Caco-2 (cell line): ENCODE measurements at regions of chr13 and their contacts with region 1.

Region 1: DNA sequence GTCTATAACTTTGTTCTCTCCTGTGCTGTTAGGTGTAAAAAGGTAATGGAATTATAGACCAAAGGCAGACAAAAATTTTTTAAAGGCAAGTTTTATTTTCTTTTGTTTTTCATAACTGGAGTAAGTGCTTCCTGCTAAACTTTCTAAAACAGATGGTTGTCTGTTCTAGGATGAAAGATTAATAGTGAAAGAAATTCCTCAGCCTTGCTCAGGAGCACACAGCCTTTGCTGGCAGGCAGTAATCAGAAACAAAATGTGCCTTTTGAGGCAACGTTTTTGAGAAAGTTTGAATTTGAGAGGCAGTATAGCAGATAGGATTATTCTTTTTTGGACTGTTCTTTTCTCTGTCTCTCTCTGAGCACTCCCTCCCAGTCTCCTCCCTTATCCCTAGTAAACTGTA is 2749.5 kb downstream of the PCDH9 start:
- DNase-seq: no peak
- H3K4me3 ChIP-seq: no peak overlapping the region
- H3K4me3 Mint-ChIP-seq: no peak overlapping the region
- H3K27ac Mint-ChIP-seq: peak overlapping the region; percentile 78
- H3K4me1 ChIP-seq: peaks cover 55% of the 10 kb centered on the region
- H3K4me1 Mint-ChIP-seq: peaks cover 55% of the 10 kb centered on the region
- H3K27me3 ChIP-seq: no peaks in the 10 kb centered on the region
- H3K27me3 Mint-ChIP-seq: no peaks in the 10 kb centered on the region
- CTCF ChIP-seq: no peak

Region 2: DNA sequence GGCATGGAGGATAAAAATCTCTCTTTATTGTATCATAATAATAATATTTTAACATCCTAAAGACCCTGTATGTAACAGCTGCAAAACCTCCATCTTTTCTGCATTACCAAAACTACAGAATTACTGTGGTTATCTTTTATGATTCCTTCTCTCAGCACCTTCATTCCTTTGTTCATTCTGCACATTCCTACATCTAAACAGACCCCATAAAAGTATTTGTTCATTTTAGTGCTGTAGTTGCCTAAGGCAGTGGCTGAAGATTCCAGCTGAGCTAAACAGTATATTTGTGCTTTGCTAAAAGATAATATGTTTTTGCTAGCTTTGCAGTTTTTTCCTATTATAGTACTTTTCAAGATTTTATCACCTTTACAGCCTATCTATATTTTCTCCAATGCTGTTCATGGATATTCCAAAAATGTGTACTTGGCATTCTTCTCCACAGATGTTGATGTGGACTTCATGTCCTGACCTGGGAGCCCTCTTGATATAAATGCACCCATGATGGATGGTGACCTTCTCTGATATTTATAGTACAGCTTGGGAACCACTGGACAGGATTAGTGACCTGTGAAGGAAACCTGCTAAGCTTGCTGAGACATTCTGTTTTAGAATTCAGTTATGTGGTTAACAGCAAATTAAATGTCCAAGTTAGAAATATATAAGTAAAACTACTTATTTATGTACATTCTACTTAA is 232.2 kb before region 1 on chr13:
- CTCF ChIA-PET with region 1: no interaction called
- POLR2A ChIA-PET with region 1: no interaction called
- intact Hi-C with region 1: loop called (anchors 1 kb)
- DNase-seq: peak; percentile 53 to 54
- H3K4me3 ChIP-seq: no peak overlapping the region
- H3K4me3 Mint-ChIP-seq: peak overlapping the region; percentile 45
- H3K27ac Mint-ChIP-seq: peak overlapping the region; percentile 68
- H3K4me1 ChIP-seq: peaks cover 32% of the 10 kb centered on the region
- H3K4me1 Mint-ChIP-seq: peaks cover 46% of the 10 kb centered on the region
- H3K27me3 ChIP-seq: no peaks in the 10 kb centered on the region
- H3K27me3 Mint-ChIP-seq: no peaks in the 10 kb centered on the region
- CTCF ChIP-seq: no peak

Region 3: DNA sequence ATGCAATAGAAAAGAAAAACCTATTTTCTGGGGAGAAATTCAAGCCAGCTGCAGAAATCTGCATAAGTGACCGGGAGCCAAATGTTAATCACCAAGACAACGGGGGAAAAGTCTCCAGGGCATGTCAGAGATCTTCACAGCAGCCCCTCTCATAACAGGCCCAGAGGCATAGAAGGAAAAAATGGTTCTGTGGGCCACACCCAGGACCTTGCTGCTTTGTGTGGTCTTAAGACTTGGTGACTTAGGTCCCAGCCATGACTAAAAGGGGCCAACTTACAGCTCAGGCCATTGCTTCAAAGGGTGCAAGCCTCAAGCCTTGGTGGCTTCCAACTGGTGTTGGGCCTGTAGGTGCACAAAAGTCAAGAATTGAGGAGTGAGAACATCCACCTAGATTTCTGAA is 217.4 kb before region 1 on chr13:
- CTCF ChIA-PET with region 1: no interaction called
- POLR2A ChIA-PET with region 1: no interaction called
- intact Hi-C with region 1: no loop called
- DNase-seq: no peak
- H3K4me3 ChIP-seq: no peak overlapping the region
- H3K4me3 Mint-ChIP-seq: no peak overlapping the region
- H3K27ac Mint-ChIP-seq: no peak overlapping the region
- H3K4me1 ChIP-seq: no peaks in the 10 kb centered on the region
- H3K4me1 Mint-ChIP-seq: no peaks in the 10 kb centered on the region
- H3K27me3 ChIP-seq: no peaks in the 10 kb centered on the region
- H3K27me3 Mint-ChIP-seq: no peaks in the 10 kb centered on the region
- CTCF ChIP-seq: no peak

Region 4: GRCh38 chr13:64579331-64579730 is 98.7 kb after region 1 on chr13:
- CTCF ChIA-PET with region 1: no interaction called
- POLR2A ChIA-PET with region 1: no interaction called
- intact Hi-C with region 1: no loop called
- DNase-seq: no peak
- H3K4me3 ChIP-seq: no peak overlapping the region
- H3K4me3 Mint-ChIP-seq: no peak overlapping the region
- H3K27ac Mint-ChIP-seq: no peak overlapping the region
- H3K4me1 ChIP-seq: no peaks in the 10 kb centered on the region
- H3K4me1 Mint-ChIP-seq: no peaks in the 10 kb centered on the region
- H3K27me3 ChIP-seq: no peaks in the 10 kb centered on the region
- H3K27me3 Mint-ChIP-seq: no peaks in the 10 kb centered on the region
- CTCF ChIP-seq: no peak

Region 5: GRCh38 chr13:64643070-64643469 is 162.4 kb after region 1 on chr13:
- CTCF ChIA-PET with region 1: no interaction called
- POLR2A ChIA-PET with region 1: interaction called, 3 read pairs
- intact Hi-C with region 1: loop called (anchors 2 kb)
- DNase-seq: peak in 1 of 2 experiments; percentile 31
- H3K4me3 ChIP-seq: no peak overlapping the region
- H3K4me3 Mint-ChIP-seq: peak overlapping the region; percentile 22
- H3K27ac Mint-ChIP-seq: peak overlapping the region; percentile 38
- H3K4me1 ChIP-seq: peaks cover 31% of the 10 kb centered on the region
- H3K4me1 Mint-ChIP-seq: peaks cover 38% of the 10 kb centered on the region
- H3K27me3 ChIP-seq: no peaks in the 10 kb centered on the region
- H3K27me3 Mint-ChIP-seq: no peaks in the 10 kb centered on the region
- CTCF ChIP-seq: no peak

Region 6: GRCh38 chr13:64723724-64724123 is 243.1 kb after region 1 on chr13:
- CTCF ChIA-PET with region 1: no interaction called
- POLR2A ChIA-PET with region 1: no interaction called
- intact Hi-C with region 1: loop called (anchors 5 kb)
- DNase-seq: peak; percentile 65 to 70
- H3K4me3 ChIP-seq: no peak overlapping the region
- H3K4me3 Mint-ChIP-seq: peak overlapping the region; percentile 48
- H3K27ac Mint-ChIP-seq: peak overlapping the region; percentile 71
- H3K4me1 ChIP-seq: peaks cover 15% of the 10 kb centered on the region
- H3K4me1 Mint-ChIP-seq: peaks cover 29% of the 10 kb centered on the region
- H3K27me3 ChIP-seq: no peaks in the 10 kb centered on the region
- H3K27me3 Mint-ChIP-seq: no peaks in the 10 kb centered on the region
- CTCF ChIP-seq: no peak

Region 7: DNA sequence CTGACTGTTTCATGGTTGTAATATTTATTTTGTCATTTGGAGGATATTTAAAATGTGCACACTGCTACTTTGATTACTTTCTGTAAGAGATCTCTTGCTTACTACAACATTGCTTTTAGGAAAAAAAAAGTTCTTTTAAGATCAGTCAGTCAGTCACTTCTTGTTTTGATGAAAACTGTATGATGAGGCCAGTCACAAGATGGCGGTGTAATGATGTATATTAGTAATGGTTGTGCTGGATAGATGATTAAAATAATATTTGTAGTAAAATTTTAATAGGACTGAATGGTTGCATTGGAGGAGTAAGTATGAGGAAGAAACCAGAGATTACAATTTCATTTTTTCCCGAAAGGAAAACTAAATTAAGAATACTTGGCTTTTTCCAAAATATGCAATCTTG is 338.4 kb after region 1 on chr13:
- CTCF ChIA-PET with region 1: no interaction called
- POLR2A ChIA-PET with region 1: no interaction called
- intact Hi-C with region 1: no loop called
- DNase-seq: no peak
- H3K4me3 ChIP-seq: no peak overlapping the region
- H3K4me3 Mint-ChIP-seq: no peak overlapping the region
- H3K27ac Mint-ChIP-seq: no peak overlapping the region
- H3K4me1 ChIP-seq: no peaks in the 10 kb centered on the region
- H3K4me1 Mint-ChIP-seq: no peaks in the 10 kb centered on the region
- H3K27me3 ChIP-seq: no peaks in the 10 kb centered on the region
- H3K27me3 Mint-ChIP-seq: no peaks in the 10 kb centered on the region
- CTCF ChIP-seq: no peak

Region 8: DNA sequence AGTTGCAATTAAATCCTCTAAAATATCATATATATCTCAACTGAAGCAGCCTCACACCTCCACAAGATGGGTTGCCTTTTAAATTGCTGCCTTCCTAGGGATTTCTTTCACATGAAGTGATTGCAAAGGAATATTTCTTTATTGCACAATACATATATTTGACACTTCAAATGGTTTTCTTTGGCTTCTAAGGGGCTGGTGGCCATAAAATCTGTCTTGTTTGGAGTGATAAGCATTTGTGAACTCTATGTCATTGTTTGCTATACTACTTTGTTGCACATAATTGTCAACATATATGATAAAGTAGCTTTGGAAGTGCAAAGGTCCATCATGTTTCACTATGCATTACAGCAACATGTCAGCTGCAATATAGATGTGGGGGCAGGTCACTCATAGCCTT is 368.5 kb after region 1 on chr13:
- CTCF ChIA-PET with region 1: no interaction called
- POLR2A ChIA-PET with region 1: no interaction called
- intact Hi-C with region 1: loop called (anchors 1 kb)
- DNase-seq: peak; percentile 69 to 70
- H3K4me3 ChIP-seq: no peak overlapping the region
- H3K4me3 Mint-ChIP-seq: no peak overlapping the region
- H3K27ac Mint-ChIP-seq: no peak overlapping the region
- H3K4me1 ChIP-seq: peaks cover 32% of the 10 kb centered on the region
- H3K4me1 Mint-ChIP-seq: peaks cover 34% of the 10 kb centered on the region
- H3K27me3 ChIP-seq: no peaks in the 10 kb centered on the region
- H3K27me3 Mint-ChIP-seq: no peaks in the 10 kb centered on the region
- CTCF ChIP-seq: no peak